ENCODE measurements at regions of chr6 and their contacts with region 1.

Region 1: DNA sequence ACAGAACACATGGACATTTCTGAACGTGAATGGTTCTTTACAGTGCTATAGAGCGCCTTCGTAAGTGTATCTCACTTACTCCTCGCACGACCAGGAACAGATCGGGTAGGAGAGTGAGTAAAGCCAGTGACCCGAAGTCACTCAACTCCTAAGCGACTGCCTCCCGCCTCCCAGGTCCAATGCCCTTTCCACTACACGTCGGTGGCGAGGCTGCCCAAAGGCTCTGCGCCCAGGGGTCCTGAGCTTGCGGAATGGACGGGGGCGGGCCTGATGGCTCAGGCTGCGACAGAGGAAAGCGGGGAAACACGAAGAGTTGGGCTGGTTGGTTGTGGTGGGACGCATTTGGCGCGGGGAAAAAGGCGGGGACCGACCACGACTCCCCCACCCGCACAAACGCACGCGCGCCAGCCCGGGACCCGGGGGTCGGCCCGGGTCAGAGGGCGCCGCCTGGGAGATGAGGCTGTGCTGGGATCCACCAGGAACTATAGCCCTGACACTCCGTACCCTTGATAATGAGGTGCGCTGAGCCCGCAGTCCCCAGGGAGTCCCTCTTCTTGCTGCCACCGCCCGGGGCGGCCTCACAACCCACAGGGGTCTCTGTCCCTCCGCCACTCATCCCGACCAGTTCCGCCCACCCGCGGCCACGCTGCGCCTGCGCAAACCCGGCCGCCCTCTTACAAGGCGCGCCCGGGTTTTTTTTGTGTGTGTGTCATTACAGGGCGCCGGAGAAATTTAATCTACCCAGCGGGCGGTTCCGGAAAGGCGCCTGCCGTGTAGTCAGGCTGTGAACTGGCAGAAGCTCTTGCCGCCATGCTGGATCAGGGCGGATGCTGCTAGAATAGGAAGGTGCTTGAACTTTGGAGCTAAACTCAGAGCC is at the start of gene BLOC1S5:
- DNase-seq: peak; percentile 89 to 98 (median 94)
- ATAC-seq: peak; percentile 96
- H3K4me3 ChIP-seq: peak within 1 kb of the TSS; percentile 88
- H3K4me3 Mint-ChIP-seq: peak within 1 kb of the TSS; percentile 93
- H3K27ac ChIP-seq: peak within 1 kb of the TSS; percentile 77 to 88
- H3K27ac Mint-ChIP-seq: peak within 1 kb of the TSS; percentile 90
- H3K4me1 ChIP-seq: peaks cover 20% of the 10 kb centered on the region
- H3K4me1 Mint-ChIP-seq: peaks cover 37% of the 10 kb centered on the region
- H3K27me3 ChIP-seq: no peaks in the 10 kb centered on the region
- H3K27me3 Mint-ChIP-seq: no peaks in the 10 kb centered on the region
- CTCF ChIP-seq: no peak
- total RNA-seq, gene BLOC1S5: 5.7 to 7.2 TPM

Region 2: DNA sequence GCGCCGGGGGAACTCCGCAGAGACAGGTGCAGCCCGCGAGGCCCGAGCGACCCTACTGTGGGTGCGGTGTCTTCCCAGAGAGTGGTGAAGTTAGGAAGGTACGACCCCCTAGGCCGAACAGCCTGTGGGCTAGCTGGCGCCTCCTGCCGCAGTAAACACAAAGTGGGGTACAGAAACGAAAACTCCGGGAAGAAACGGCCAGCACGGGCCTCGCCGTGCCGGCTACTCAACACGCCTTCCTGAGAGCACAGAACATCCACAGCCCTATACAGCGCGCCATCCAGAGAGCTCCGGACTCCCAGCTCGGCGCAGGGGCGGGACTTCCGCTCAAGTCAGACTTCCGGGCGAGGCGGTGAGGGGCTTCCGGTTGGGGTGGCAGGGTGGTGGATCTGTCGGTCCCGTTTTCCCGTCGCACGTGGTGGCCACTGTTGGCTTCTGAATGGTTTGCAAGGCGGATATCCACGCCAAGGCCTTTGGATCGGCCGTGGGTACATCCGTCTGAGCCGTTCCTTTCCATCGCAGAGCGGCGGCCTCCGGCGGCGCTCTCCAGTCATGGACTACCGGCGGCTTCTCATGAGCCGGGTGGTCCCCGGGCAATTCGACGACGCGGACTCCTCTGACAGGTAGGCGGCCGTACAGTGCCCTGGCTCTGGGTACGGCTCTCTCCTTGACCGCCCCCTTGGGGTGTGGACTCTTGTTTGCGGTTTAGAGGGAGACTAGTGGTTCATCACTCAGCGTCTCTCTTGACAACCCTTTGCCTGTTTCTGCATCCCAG is 674.4 kb before region 1 on chr6 and contains the starts of genes CAGE1 and RIOK1:
- CTCF ChIA-PET with region 1: no interaction called
- POLR2A ChIA-PET with region 1: interaction called, 3 read pairs
- intact Hi-C with region 1: loop called in 1 of 2 experiments (anchors 5 kb)
- DNase-seq: peak; percentile 89 to 97 (median 92)
- ATAC-seq: peak; percentile 88
- H3K4me3 ChIP-seq: peak within 1 kb of the TSS; percentile 80
- H3K4me3 Mint-ChIP-seq: peak within 1 kb of the TSS; percentile 93
- H3K27ac ChIP-seq: peak within 1 kb of the TSS; percentile 98 to 99
- H3K27ac Mint-ChIP-seq: peak within 1 kb of the TSS; percentile 98
- H3K4me1 ChIP-seq: peaks cover 28% of the 10 kb centered on the region
- H3K4me1 Mint-ChIP-seq: peaks cover 43% of the 10 kb centered on the region
- H3K27me3 ChIP-seq: no peaks in the 10 kb centered on the region
- H3K27me3 Mint-ChIP-seq: no peaks in the 10 kb centered on the region
- CTCF ChIP-seq: no peak
- total RNA-seq, gene CAGE1: 0.38 to 0.39 TPM
- total RNA-seq, gene RIOK1: 25.5 to 28.1 TPM

Region 3: DNA sequence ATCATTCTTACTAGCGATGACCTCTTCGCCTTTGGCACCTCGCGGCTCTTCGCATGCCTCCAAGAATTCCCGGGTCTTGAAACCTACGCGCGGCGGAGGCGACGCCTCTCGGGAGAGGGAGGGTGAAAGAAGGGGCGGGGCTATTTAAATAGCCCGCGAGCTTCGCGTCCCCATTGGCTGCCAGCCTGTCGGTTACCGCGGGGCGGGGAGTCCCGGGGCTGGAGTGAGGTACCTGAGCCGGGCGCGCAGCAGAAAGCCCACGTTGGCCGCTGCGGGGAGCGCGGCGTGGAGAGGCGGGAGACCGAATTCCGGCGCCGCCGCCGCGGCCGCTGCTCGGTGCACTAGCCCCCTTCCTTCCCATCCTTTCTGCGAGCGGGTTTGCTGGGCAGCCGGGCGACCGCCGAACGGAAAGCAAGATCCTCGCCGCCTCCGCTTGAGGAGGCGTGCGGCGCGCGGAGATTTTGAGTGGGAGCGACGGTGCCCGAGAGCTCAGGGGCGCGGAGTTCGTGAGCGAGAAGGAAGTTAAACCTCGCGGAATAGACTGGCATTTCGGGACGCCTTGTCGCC is 338.1 kb before region 1 on chr6 and contains the start of gene BMP6:
- CTCF ChIA-PET with region 1: no interaction called
- POLR2A ChIA-PET with region 1: no interaction called
- intact Hi-C with region 1: loop called (anchors 2 kb)
- DNase-seq: peak in 12 of 14 experiments; percentile 5 to 68 (median 40)
- ATAC-seq: peak; percentile 77
- H3K4me3 ChIP-seq: peak within 1 kb of the TSS; percentile 34
- H3K4me3 Mint-ChIP-seq: peak within 1 kb of the TSS; percentile 83
- H3K27ac ChIP-seq: no peak within 1 kb of the TSS
- H3K27ac Mint-ChIP-seq: no peak within 1 kb of the TSS
- H3K4me1 ChIP-seq: peaks cover 28% of the 10 kb centered on the region
- H3K4me1 Mint-ChIP-seq: peaks cover 11% of the 10 kb centered on the region
- H3K27me3 ChIP-seq: peaks cover 53 to 54% of the 10 kb centered on the region in 2 experiments
- H3K27me3 Mint-ChIP-seq: peaks cover 80% of the 10 kb centered on the region
- CTCF ChIP-seq: no peak
- total RNA-seq, gene BMP6: not detected

Region 4: DNA sequence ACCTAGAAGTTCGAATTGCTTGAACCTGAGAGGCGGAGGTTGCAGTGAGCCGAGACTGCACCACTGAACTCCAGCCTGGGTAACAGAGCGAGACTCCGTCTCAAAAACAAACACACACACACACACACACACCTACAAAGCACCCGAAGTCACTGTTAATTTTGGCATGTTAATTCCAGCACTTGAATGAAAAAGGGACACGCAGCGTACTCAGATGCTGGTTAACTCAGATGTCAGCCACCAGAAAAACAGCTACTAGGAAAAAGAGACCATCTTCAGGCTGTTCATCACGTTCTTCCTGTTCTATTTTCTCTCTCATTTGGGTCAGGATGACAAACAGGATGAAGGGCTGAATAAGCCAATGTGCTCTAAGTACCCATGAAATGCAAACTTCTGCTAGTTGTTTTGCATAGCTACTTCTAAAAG is 46.7 kb before region 1 on chr6:
- CTCF ChIA-PET with region 1: no interaction called
- POLR2A ChIA-PET with region 1: interaction called, 23 read pairs
- intact Hi-C with region 1: no loop called
- DNase-seq: peak in 2 of 14 experiments; percentile 6 to 7
- ATAC-seq: peak; percentile 91
- H3K4me3 ChIP-seq: no peak overlapping the region
- H3K4me3 Mint-ChIP-seq: peak overlapping the region; percentile 88
- H3K27ac ChIP-seq: no peak overlapping the region
- H3K27ac Mint-ChIP-seq: peak overlapping the region; percentile 90
- H3K4me1 ChIP-seq: no peaks in the 10 kb centered on the region
- H3K4me1 Mint-ChIP-seq: peaks cover 22% of the 10 kb centered on the region
- H3K27me3 ChIP-seq: no peaks in the 10 kb centered on the region
- H3K27me3 Mint-ChIP-seq: no peaks in the 10 kb centered on the region
- CTCF ChIP-seq: no peak

Region 5: DNA sequence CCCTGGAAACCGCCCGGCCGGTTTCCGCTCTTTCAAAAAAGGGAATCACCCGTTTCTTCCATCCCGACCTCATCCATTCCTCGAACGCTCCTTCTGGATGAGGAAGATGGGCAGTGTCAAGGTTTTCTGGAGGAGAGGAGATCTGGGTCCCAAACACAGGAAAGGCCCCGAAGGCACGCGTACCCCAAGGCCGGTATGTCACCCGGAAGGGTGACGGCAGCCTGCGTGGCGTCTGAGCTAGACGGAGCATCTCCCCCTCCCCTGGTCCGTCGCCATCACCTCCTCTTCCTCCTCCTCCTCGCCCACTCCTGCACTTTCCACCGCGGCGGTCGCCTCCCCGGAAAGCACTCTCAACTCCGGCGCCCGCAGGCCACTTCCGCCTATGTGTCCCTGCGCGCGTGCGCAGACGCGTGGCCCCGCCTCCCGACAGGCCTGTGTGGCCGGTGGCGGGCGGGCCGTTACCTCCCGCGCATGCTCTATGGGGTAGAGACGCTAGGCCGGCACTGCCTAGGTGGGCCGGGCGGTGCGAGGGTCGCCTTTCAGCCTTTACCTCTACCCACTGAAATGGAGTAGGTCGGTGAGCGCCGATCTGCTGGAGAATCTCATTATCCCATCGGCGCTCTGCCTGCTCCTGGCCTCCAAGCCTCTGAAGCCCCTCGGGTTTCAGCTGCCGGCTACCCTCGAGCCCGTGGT is 371.3 kb after region 1 on chr6 and contains the start of gene SLC35B3:
- CTCF ChIA-PET with region 1: no interaction called
- POLR2A ChIA-PET with region 1: interaction called, 4 read pairs
- intact Hi-C with region 1: loop called (anchors 5 to 10 kb)
- DNase-seq: peak; percentile 95 to 99 (median 98)
- ATAC-seq: peak; percentile 95
- H3K4me3 ChIP-seq: peak within 1 kb of the TSS; percentile 95
- H3K4me3 Mint-ChIP-seq: peak within 1 kb of the TSS; percentile 96
- H3K27ac ChIP-seq: peak within 1 kb of the TSS; percentile 90 to 94
- H3K27ac Mint-ChIP-seq: peak within 1 kb of the TSS; percentile 97
- H3K4me1 ChIP-seq: peaks cover 8% of the 10 kb centered on the region
- H3K4me1 Mint-ChIP-seq: peaks cover 58% of the 10 kb centered on the region
- H3K27me3 ChIP-seq: no peaks in the 10 kb centered on the region
- H3K27me3 Mint-ChIP-seq: no peaks in the 10 kb centered on the region
- CTCF ChIP-seq: no peak
- total RNA-seq, gene SLC35B3: 2.4 TPM

Measured in CD4-positive, alpha-beta T cell (primary cell).